PC-9 (cell line): ENCODE measurements at regions of chr3 and their contacts with region 1.

Region 1: GRCh38 chr3:152471814-152472671 is 203.3 kb downstream of the MBNL1 start:
- DNase-seq: peak in 1 of 2 experiments; percentile 25
- H3K4me3 ChIP-seq: no peak overlapping the region
- H3K27ac ChIP-seq: no peak overlapping the region
- H3K4me1 ChIP-seq: no peaks in the 10 kb centered on the region
- H3K27me3 ChIP-seq: no peaks in the 10 kb centered on the region
- CTCF ChIP-seq: peak; percentile 61

Region 2: GRCh38 chr3:152127058-152127457 is 345.0 kb before region 1 on chr3:
- CTCF ChIA-PET with region 1: no interaction called
- POLR2A ChIA-PET with region 1: no interaction called
- intact Hi-C with region 1: no loop called
- DNase-seq: no peak
- H3K4me3 ChIP-seq: no peak overlapping the region
- H3K27ac ChIP-seq: no peak overlapping the region
- H3K4me1 ChIP-seq: no peaks in the 10 kb centered on the region; the same call in 1 of the 2 replicates
- H3K27me3 ChIP-seq: no peaks in the 10 kb centered on the region
- CTCF ChIP-seq: no peak

Region 3: DNA sequence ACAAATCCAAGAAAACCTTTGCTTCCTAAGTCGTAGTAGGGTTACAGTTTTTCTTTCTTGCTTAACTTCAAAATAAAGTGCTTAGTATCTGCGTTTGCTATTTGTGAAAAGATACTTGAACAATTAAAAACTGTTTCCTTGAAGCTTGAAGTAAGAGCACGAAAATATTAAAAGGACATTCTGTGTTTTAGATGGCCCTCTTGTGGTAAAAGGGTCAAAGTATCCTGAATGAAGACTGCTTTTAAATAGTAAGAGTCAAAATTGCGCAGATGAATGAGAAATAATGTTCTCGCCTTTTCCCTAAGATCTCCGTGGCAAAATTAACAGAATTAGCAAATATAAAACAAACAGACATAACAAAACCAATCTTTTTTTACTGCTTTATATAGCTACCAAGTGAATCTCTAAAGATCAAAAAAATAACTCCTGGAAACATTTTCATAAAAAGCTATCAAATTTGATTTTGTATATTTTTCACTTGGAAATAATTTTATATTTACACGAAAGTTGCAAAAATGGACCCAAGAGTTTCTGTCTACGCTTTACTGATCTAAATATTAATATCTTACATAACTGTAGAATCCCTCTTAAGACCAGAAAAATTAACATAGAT is 27.9 kb before region 1 on chr3:
- CTCF ChIA-PET with region 1: no interaction called
- POLR2A ChIA-PET with region 1: no interaction called
- intact Hi-C with region 1: no loop called
- DNase-seq: peak in 1 of 2 experiments; percentile 63
- H3K4me3 ChIP-seq: no peak overlapping the region
- H3K27ac ChIP-seq: peak overlapping the region; percentile 10; the same call in 1 of the 2 replicates
- H3K4me1 ChIP-seq: no peaks in the 10 kb centered on the region
- H3K27me3 ChIP-seq: no peaks in the 10 kb centered on the region
- CTCF ChIP-seq: peak; percentile 87

Region 4: DNA sequence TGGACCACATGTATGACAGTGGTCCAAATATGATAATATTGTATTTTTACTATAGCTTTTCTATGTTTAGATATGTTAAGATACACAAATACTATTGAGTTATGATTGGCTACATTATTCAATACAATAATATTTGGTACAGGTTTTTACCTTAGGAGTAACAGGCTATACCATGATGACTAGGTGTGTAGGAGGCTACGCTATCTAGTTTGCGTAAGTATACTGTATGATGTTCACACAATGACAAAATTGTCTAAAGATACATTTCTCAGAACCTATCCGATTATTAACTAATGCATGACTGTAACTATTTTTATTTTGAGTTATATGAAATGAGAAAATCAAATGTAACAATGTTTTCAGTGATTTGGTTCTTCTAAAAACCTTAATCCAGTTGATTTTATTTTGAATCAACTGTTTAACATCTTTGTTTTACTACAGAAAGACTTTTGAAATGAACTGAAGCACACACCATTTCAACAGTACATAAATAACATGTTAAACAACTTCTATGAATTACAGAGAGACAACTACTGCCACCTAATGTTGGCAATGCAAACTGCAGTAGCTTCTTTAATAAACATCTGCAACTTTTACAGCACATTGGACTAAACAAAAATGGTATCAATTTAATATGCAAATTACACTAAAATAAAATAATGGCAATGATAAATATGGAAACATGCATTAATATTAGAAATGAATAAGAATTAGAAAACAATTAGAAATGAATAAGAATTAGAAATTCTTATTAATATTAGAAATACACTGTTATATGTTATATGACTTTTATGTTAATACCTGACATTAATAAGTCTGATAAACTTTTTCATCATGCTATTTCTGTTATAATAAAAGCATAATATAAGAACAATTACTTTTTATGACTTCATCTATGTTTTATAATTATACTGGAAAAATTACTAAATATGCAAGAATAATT is 52.4 kb after region 1 on chr3:
- CTCF ChIA-PET with region 1: no interaction called
- POLR2A ChIA-PET with region 1: interaction called, 25 read pairs
- intact Hi-C with region 1: no loop called
- DNase-seq: peak in 1 of 2 experiments; percentile 18
- H3K4me3 ChIP-seq: no peak overlapping the region
- H3K27ac ChIP-seq: no peak overlapping the region
- H3K4me1 ChIP-seq: no peaks in the 10 kb centered on the region
- H3K27me3 ChIP-seq: no peaks in the 10 kb centered on the region
- CTCF ChIP-seq: peak; percentile 95

Region 5: DNA sequence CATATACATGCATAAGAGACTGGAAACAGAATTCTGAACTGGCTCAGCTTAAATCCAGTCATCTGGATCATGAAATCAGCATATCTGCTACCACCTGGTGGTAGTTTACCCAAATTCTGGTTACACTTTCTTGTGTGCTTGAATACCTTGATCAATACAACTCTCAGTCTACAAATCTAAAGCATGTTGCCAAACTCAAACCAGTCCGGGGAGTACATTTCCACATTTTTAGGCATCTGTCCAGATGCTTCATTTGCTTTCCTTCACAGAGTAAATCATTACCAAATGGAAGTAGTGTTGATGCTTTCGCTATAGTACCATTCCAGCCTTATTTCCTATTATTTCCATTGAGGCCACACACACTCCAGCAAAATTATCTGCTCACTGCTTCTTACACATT is 489.3 kb after region 1 on chr3:
- CTCF ChIA-PET with region 1: no interaction called
- POLR2A ChIA-PET with region 1: no interaction called
- intact Hi-C with region 1: loop called (anchors 10 kb)
- DNase-seq: peak in 1 of 2 experiments; percentile 56
- H3K4me3 ChIP-seq: no peak overlapping the region
- H3K27ac ChIP-seq: no peak overlapping the region
- H3K4me1 ChIP-seq: peaks cover 33% of the 10 kb centered on the region
- H3K27me3 ChIP-seq: no peaks in the 10 kb centered on the region
- CTCF ChIP-seq: peak; percentile 62

Region 6: DNA sequence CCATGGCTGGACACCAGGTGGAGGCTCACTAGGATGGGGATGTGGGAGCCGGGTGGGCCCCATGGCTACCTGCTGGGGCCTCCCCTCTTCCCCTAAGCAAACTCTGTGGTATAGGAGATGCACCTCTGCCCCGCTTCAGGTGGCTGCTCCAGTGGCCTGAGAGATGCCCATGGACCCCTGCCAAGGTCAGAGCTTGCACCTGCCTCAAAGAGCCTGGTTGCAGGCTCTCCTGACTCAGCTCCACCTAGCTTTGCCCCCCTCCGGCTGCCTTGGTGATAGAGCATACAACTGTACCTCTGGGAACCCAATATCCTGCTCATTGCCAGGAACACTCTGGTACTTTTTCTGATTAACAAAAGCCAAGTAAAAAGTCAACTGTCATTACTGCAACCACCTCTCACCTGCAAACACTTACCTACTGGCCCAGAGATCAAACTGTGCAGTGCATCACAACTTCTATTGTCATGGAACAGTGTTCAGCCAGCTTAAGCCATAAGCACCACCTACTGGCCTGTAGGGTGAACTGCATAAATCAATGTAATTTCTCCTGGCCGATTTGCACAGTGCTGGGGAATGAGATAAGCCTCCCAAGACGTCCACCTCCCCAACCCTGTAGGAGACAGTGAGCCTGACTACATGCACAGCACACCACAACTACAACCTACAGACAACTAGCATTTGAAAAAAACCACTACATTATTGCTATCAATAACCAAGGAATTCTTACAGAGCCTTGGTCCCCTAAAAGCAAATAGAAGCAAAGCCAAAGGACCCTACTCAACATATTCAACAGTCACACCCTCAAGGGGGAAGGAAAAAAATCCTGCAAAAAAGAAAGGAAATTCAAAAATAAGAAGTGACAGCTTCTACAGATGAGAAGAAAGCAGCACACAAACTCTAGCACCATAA is 1296.8 kb after region 1 on chr3:
- CTCF ChIA-PET with region 1: no interaction called
- POLR2A ChIA-PET with region 1: no interaction called
- intact Hi-C with region 1: loop called (anchors 10 kb)
- DNase-seq: peak; percentile 38 to 50
- H3K4me3 ChIP-seq: no peak overlapping the region
- H3K27ac ChIP-seq: no peak overlapping the region
- H3K4me1 ChIP-seq: 0 out of 2 replicates have a peak, but pooled peaks cover 9% of the 10 kb centered on the region
- H3K27me3 ChIP-seq: no peaks in the 10 kb centered on the region
- CTCF ChIP-seq: peak; percentile 93

Region 7: DNA sequence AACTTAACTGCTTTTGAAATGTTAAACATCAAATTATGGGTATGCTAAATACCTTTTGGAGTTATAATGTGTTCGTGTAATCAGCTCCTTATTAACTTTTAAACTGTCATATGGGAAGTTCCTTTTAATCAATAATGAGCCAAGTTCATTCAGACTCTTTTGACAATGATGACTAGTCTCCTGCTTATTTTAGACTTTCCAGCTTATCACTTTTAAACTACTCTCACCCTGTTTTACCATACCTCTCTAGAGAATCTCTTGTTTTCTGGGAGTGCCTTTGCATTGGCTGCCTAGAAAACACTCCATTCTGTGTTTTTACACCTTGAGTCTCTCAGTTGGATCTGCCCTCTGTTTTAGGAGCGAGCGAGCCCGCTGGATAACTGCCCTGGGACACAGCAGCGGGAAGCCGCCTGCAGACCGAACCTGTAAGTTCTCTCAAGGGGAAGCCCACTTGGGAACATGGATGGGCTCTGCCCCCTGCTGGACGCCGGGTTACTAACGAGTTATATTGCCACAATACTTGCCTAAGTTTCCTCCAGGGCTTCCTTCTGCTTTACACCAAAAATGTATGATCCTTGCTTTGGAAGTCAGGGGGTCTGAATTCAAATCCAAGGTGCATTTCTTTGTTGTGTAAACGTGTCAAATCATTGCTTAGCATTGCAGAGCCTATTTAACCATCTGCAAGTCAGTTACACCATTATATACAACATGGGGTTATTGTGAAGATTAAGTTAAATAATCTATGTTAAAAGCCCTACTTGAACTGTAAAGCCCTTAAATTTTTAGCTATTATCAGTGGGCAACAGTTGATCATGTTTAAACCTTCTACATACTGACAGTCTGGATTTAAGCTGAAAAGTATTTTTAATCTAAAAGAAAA is 1781.0 kb after region 1 on chr3:
- CTCF ChIA-PET with region 1: no interaction called
- POLR2A ChIA-PET with region 1: no interaction called
- intact Hi-C with region 1: loop called (anchors 10 kb)
- DNase-seq: peak; percentile 60 to 85
- H3K4me3 ChIP-seq: no peak overlapping the region
- H3K27ac ChIP-seq: no peak overlapping the region
- H3K4me1 ChIP-seq: no peaks in the 10 kb centered on the region
- H3K27me3 ChIP-seq: no peaks in the 10 kb centered on the region
- CTCF ChIP-seq: peak; percentile 95